ENCODE measurements at regions of chr5 and their contacts with region 1.

Region 1: GRCh38 chr5:135191084-135191826 is 157.2 kb upstream of the PITX1 start:
- DNase-seq: peak; percentile 61
- ATAC-seq: peak; percentile 98
- H3K4me3 Mint-ChIP-seq: peak overlapping the region; percentile 78
- H3K27ac Mint-ChIP-seq: no peak overlapping the region
- H3K4me1 Mint-ChIP-seq: peaks cover 7% of the 10 kb centered on the region
- H3K27me3 Mint-ChIP-seq: peaks cover 38% of the 10 kb centered on the region
- CTCF ChIP-seq: peak; percentile 55

Region 2: GRCh38 chr5:134784241-134784920 is 406.9 kb before region 1 on chr5:
- CTCF ChIA-PET with region 1: no interaction called
- POLR2A ChIA-PET with region 1: no interaction called
- intact Hi-C with region 1: loop called (anchors 10 kb)
- DNase-seq: no peak
- ATAC-seq: no peak
- H3K4me3 Mint-ChIP-seq: no peak overlapping the region
- H3K27ac Mint-ChIP-seq: peak overlapping the region; percentile 6
- H3K4me1 Mint-ChIP-seq: no peaks in the 10 kb centered on the region
- H3K27me3 Mint-ChIP-seq: no peaks in the 10 kb centered on the region
- CTCF ChIP-seq: no peak

Region 3: GRCh38 chr5:134917070-134917815 is 274.0 kb before region 1 on chr5:
- CTCF ChIA-PET with region 1: interaction called, 25 read pairs
- POLR2A ChIA-PET with region 1: no interaction called
- intact Hi-C with region 1: no loop called
- DNase-seq: no peak
- ATAC-seq: no peak
- H3K4me3 Mint-ChIP-seq: no peak overlapping the region
- H3K27ac Mint-ChIP-seq: no peak overlapping the region
- H3K4me1 Mint-ChIP-seq: no peaks in the 10 kb centered on the region
- H3K27me3 Mint-ChIP-seq: no peaks in the 10 kb centered on the region
- CTCF ChIP-seq: no peak

Region 4: GRCh38 chr5:135019314-135019713 is 171.9 kb before region 1 on chr5:
- CTCF ChIA-PET with region 1: no interaction called
- POLR2A ChIA-PET with region 1: no interaction called
- intact Hi-C with region 1: loop called (anchors 1 kb)
- DNase-seq: no peak
- ATAC-seq: no peak
- H3K4me3 Mint-ChIP-seq: no peak overlapping the region
- H3K27ac Mint-ChIP-seq: no peak overlapping the region
- H3K4me1 Mint-ChIP-seq: no peaks in the 10 kb centered on the region
- H3K27me3 Mint-ChIP-seq: peaks cover 12% of the 10 kb centered on the region
- CTCF ChIP-seq: no peak

Region 5: DNA sequence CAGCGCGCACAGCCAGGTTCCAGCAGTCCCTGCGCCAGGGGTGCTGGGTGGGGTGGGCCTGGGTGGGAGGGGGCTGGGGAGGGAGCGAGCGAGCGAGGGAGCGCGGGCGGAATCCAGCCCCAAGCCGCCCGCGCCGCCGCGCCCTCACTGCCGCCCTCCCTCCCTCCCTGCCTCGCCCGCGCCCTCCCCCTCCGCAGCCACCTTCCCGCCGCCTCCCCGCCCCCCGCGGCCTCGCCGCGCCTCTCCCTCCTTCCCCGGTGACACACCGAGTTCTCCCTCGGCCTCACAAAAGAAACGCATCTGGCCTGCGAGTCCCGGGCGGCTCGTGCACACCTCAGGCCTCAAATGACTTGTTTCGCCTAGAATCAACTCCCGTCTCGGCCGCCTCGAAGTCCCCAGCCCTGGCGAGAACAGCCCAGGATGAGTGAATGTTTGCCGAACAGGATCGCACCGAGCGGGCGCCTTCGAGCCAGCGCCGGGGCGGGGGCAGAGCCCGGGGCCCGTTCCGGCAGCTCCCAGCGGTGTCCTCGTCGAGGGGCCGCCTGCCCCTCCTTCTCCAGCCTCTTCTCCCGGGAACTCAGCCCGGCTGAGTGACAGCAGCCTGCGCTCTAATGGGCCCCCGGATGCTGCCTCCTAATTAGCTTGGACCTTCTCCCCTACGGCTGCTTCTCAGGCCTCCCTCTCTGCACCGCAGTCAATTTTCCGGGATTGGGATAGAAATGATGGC is 156.9 kb before region 1 on chr5:
- CTCF ChIA-PET with region 1: no interaction called
- POLR2A ChIA-PET with region 1: no interaction called
- intact Hi-C with region 1: loop called (anchors 5 kb)
- DNase-seq: no peak
- ATAC-seq: peak; percentile 33
- H3K4me3 Mint-ChIP-seq: peak overlapping the region; percentile 85
- H3K27ac Mint-ChIP-seq: peak overlapping the region; percentile 53
- H3K4me1 Mint-ChIP-seq: peaks cover 42% of the 10 kb centered on the region
- H3K27me3 Mint-ChIP-seq: peaks cover 64% of the 10 kb centered on the region
- CTCF ChIP-seq: no peak

Measured in activated B cell treated with CpG ODN at 0.5 μM for 24 hours (primary cell).